ENCODE measurements at regions of chr5 and their contacts with region 1.

Region 1: GRCh38 chr5:151115274-151115905 is 34.6 kb upstream of the TNIP1 start:
- DNase-seq: peak; percentile 45 to 82 (median 76)
- ATAC-seq: peak; percentile 93
- H3K4me3 ChIP-seq: no peak overlapping the region
- H3K4me3 Mint-ChIP-seq: no peak overlapping the region
- H3K27ac ChIP-seq: no peak overlapping the region
- H3K27ac Mint-ChIP-seq: peak overlapping the region; percentile 66
- H3K4me1 ChIP-seq: peaks cover 11% of the 10 kb centered on the region
- H3K4me1 Mint-ChIP-seq: peaks cover 17% of the 10 kb centered on the region
- H3K27me3 ChIP-seq: no peaks in the 10 kb centered on the region
- H3K27me3 Mint-ChIP-seq: no peaks in the 10 kb centered on the region
- CTCF ChIP-seq: peak; percentile 93

Region 2: DNA sequence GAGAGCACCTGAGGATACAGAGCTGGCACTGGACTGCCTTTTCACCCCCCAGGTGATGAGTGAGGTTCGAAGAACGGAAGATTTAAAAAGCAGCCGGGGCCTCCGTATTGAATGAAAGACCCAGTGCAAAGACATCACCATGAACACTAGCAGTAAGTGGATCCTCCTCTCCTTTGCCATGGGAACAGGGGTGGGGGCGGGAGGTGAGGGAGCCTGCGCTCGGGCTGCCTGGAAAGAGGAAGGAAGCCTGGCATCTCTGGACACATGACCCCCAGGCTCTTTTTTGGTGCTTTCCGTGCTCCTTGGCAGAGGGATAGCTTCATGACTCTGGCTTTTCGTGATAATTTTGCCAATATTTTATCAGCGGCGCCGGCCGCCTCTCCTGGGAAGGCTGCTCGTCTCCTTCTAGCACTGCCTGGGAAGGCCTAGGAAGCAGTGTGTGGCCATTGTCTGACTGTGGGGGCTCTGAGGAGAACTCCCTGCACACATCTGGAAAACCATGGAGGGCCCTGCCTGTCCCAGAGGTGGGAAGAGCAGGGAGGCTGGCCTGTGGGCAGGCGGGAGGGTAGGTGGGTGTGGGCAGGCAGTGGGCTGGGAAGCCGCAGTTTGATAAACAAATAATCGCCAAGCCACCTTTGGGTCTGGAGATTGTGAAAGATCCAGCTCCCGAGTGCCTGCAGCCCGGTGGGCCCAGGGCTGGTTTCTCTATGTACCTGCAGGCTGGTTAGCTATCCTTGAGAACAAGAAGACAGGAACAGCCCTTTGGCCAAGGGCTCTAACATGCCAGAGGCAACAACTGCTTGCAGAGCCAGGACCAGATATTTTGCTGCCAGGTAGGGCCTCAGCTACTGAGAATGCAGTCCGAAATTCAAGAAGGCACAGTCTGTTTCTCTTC is 1973.2 kb before region 1 on chr5:
- CTCF ChIA-PET with region 1: no interaction called
- POLR2A ChIA-PET with region 1: no interaction called
- intact Hi-C with region 1: no loop called
- DNase-seq: peak in 2 of 9 experiments; percentile 2 to 4
- ATAC-seq: no peak
- H3K4me3 ChIP-seq: peak overlapping the region; percentile 47 to 67
- H3K4me3 Mint-ChIP-seq: peak overlapping the region; percentile 45
- H3K27ac ChIP-seq: no peak overlapping the region
- H3K27ac Mint-ChIP-seq: no peak overlapping the region
- H3K4me1 ChIP-seq: peaks cover 5% of the 10 kb centered on the region
- H3K4me1 Mint-ChIP-seq: peaks cover 2% of the 10 kb centered on the region
- H3K27me3 ChIP-seq: peaks cover 0 to 13% of the 10 kb centered on the region in 2 experiments
- H3K27me3 Mint-ChIP-seq: peaks cover 31% of the 10 kb centered on the region
- CTCF ChIP-seq: no peak

Region 3: GRCh38 chr5:150458819-150459557 is 656.4 kb before region 1 on chr5:
- CTCF ChIA-PET with region 1: interaction called, 4 read pairs
- POLR2A ChIA-PET with region 1: no interaction called
- intact Hi-C with region 1: loop called in 1 of 2 experiments (anchors 2 kb)
- DNase-seq: peak; percentile 73 to 93 (median 84)
- ATAC-seq: peak; percentile 93
- H3K4me3 ChIP-seq: no peak overlapping the region
- H3K4me3 Mint-ChIP-seq: peak overlapping the region; percentile 51
- H3K27ac ChIP-seq: peak overlapping the region; percentile 13 to 31
- H3K27ac Mint-ChIP-seq: peak overlapping the region; percentile 67
- H3K4me1 ChIP-seq: peaks cover 20% of the 10 kb centered on the region
- H3K4me1 Mint-ChIP-seq: peaks cover 37% of the 10 kb centered on the region
- H3K27me3 ChIP-seq: no peaks in the 10 kb centered on the region
- H3K27me3 Mint-ChIP-seq: no peaks in the 10 kb centered on the region
- CTCF ChIP-seq: peak; percentile 68

Region 4: DNA sequence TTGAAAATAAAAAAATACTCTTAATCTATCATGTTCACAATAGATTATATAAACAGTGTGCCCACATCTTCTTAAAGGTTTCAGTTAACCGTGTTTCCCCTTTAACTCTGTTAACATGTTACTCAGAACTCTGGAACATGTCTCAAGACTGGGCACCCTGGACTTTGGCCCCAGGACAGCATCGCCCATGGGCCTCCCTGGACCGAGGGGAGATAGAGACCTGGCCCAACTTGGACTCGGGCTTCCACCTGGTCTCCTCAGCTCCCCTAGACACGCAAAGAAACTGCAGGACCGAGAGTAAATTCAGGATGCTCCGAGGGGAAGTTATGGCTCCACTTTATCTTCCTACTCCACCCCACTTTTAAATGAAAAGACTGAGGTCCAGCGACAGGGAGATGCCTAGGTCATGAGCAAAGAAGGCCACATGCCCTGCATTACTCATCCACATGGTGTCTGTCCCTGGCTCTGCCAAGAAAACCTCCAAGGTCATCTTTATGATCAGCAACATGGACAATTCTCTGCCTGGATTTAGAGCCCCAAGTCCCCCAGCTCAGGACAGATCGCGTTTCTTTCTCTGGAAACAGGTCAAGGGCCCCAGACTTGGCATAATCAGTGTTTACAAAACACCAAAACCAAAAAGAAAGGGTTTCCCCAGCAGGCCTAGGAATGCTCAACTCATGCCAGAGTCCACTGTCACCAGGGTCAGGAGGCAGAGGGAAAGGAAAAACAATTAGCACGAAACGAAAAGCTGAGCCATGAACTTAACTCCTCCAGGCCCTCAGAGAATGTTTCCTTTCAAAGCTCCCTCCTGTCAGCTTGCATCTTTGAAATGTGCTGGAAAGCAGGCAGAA is 77.6 kb before region 1 on chr5:
- CTCF ChIA-PET with region 1: interaction called, 25 read pairs
- POLR2A ChIA-PET with region 1: no interaction called
- intact Hi-C with region 1: no loop called
- DNase-seq: no peak
- ATAC-seq: no peak
- H3K4me3 ChIP-seq: no peak overlapping the region
- H3K4me3 Mint-ChIP-seq: no peak overlapping the region
- H3K27ac ChIP-seq: no peak overlapping the region
- H3K27ac Mint-ChIP-seq: no peak overlapping the region
- H3K4me1 ChIP-seq: no peaks in the 10 kb centered on the region
- H3K4me1 Mint-ChIP-seq: no peaks in the 10 kb centered on the region
- H3K27me3 ChIP-seq: no peaks in the 10 kb centered on the region
- H3K27me3 Mint-ChIP-seq: no peaks in the 10 kb centered on the region
- CTCF ChIP-seq: no peak

Region 5: DNA sequence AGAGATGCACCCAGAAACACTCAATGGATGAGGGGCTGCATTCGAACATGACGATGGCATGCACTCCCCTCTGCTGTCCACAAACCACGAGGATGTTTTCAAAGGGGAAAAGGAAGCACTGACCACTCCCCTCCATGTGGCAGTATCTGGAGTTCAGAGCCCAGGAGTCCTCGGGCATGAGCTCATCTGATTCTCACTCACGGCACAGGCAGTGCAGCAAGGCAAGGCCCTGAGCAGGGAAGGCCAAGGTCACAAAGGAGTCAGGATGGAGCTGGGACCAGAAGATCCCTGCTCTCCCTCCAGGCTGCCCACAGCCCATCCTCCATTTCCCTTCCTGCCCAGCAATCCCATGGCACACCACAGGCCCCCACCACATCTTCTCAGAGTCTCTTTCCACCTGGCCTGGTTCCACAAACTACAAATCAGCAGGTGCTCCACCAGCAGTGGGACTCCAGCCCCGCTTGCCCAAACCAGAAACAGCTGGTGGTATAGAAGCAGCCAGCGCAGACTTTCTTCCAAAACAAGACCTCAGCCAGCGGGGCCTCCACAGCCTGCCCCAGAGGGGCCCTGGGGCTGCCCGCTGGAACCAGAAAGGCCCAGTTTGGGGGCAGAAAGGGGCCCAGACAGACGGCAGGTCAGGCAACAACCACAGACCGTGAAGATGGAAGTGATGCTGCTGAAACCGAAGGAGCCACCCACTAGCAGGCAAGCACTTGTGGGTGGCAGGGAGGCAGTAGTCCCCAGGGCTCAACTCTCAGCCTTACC is 46.8 kb before region 1 on chr5:
- CTCF ChIA-PET with region 1: interaction called, 121 read pairs
- POLR2A ChIA-PET with region 1: no interaction called
- intact Hi-C with region 1: no loop called
- DNase-seq: peak in 3 of 9 experiments; percentile 28 to 50 (median 37)
- ATAC-seq: peak; percentile 54
- H3K4me3 ChIP-seq: no peak overlapping the region
- H3K4me3 Mint-ChIP-seq: peak overlapping the region; percentile 11
- H3K27ac ChIP-seq: peak overlapping the region in 1 of 2 experiments; percentile 25
- H3K27ac Mint-ChIP-seq: peak overlapping the region; percentile 76
- H3K4me1 ChIP-seq: peaks cover 29% of the 10 kb centered on the region
- H3K4me1 Mint-ChIP-seq: peaks cover 73% of the 10 kb centered on the region
- H3K27me3 ChIP-seq: no peaks in the 10 kb centered on the region
- H3K27me3 Mint-ChIP-seq: no peaks in the 10 kb centered on the region
- CTCF ChIP-seq: no peak

Region 6: DNA sequence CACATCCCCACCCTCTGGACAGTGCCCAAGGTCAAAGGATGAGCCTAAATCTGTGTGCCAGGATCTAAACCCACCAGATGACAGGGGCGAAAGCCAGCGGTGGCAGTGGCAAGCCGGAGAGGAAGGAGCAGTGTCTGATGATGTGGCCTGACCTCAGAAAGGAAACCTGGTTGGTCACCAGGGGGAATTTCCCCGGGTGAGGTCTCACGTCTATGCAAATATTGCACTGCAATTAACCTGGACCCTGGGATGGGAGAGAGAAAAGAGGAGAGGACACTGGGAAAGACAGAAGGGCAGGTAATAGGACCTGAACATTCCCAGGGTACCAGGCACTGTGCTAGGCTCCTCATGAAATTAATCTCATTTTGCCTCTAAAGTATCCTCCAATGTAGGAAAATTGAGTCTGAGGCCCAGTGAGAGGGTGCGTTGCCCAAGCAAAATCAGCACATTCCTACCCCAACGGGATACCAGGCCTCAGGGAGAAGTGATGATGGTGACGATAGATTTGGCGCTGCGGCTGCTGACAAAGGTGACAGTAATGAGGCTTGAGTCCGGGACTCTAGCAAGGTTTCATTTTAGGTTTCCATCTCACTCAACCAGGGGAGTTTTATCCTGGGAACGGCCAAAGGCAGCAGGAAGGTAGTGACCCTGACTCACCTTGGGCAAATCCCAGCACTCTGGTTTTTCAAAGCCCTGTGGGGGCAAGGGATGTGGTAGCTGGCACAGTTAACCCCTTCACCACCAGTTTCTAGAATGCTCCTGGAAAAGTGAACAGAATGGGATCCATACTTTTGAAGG is 21.1 kb before region 1 on chr5:
- CTCF ChIA-PET with region 1: interaction called, 47 read pairs
- POLR2A ChIA-PET with region 1: interaction called, 14 read pairs
- intact Hi-C with region 1: loop called in 1 of 2 experiments (anchors 2 kb)
- DNase-seq: peak in 7 of 9 experiments; percentile 27 to 86 (median 53)
- ATAC-seq: peak; percentile 50
- H3K4me3 ChIP-seq: peak overlapping the region in 1 of 2 experiments; percentile 18
- H3K4me3 Mint-ChIP-seq: peak overlapping the region; percentile 52
- H3K27ac ChIP-seq: peak overlapping the region in 1 of 2 experiments; percentile 73
- H3K27ac Mint-ChIP-seq: peak overlapping the region; percentile 89
- H3K4me1 ChIP-seq: peaks cover 53% of the 10 kb centered on the region
- H3K4me1 Mint-ChIP-seq: peaks cover 70% of the 10 kb centered on the region
- H3K27me3 ChIP-seq: no peaks in the 10 kb centered on the region
- H3K27me3 Mint-ChIP-seq: no peaks in the 10 kb centered on the region
- CTCF ChIP-seq: no peak

Region 7: GRCh38 chr5:151164686-151165392 is 49.4 kb after region 1 on chr5:
- CTCF ChIA-PET with region 1: interaction called, 1,723 read pairs
- POLR2A ChIA-PET with region 1: interaction called, 6 read pairs
- intact Hi-C with region 1: loop called in 1 of 2 experiments (anchors 1 kb)
- DNase-seq: peak; percentile 62 to 90 (median 81)
- ATAC-seq: peak; percentile 96
- H3K4me3 ChIP-seq: no peak overlapping the region
- H3K4me3 Mint-ChIP-seq: no peak overlapping the region
- H3K27ac ChIP-seq: no peak overlapping the region
- H3K27ac Mint-ChIP-seq: no peak overlapping the region
- H3K4me1 ChIP-seq: peaks cover 10% of the 10 kb centered on the region
- H3K4me1 Mint-ChIP-seq: peaks cover 30% of the 10 kb centered on the region
- H3K27me3 ChIP-seq: no peaks in the 10 kb centered on the region
- H3K27me3 Mint-ChIP-seq: no peaks in the 10 kb centered on the region
- CTCF ChIP-seq: peak; percentile 92

Measured in CD8-positive, alpha-beta T cell (primary cell).